ENCODE measurements at regions of chr4 and their contacts with region 1.

Region 1: DNA sequence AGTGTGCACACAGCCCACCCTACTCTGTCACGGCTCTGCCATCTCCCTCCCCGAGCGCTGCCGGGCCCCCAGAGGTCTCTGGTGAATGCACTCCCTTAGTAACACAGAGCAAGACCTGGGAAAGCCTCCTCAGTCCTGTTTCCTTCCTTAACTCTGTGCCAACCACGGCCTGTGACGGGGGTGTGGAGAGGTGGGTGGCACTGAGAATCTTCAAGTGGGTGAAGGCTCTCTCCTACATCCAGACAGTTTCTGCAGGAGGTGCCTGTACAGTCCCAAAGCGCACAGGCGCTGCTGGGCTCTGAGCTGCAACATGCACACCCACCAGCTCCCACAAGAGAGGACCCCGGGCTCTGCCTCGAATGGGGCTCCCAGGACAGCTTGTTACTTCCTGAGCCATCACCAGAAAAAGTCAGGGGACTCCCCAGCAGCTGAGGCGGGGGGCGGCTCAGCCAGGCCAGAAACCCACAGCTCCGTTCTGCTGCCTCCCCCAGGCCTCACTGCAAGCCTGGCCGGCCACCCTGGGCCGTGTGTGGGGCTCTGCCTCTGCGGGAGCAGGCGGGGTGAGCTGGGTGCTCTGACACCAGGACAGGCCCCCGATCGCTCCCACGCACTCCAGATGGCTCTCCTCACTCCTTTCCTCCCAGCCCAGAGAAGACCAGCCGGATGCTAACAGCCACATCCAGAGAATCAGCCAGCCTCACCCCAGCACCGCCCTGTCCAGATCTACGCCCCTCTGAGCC is 29.7 kb downstream of the FAM53A start:
- DNase-seq: no peak
- H3K4me3 ChIP-seq: no peak overlapping the region
- H3K27ac ChIP-seq: no peak overlapping the region
- H3K4me1 ChIP-seq: no peaks in the 10 kb centered on the region
- H3K27me3 ChIP-seq: no peaks in the 10 kb centered on the region
- CTCF ChIP-seq: no peak

Region 2: GRCh38 chr4:1154523-1155182 is 499.7 kb before region 1 on chr4:
- CTCF ChIA-PET with region 1: no interaction called
- POLR2A ChIA-PET with region 1: interaction called, 21 read pairs
- intact Hi-C with region 1: no loop called
- DNase-seq: no peak
- H3K4me3 ChIP-seq: no peak overlapping the region
- H3K27ac ChIP-seq: no peak overlapping the region
- H3K4me1 ChIP-seq: no peaks in the 10 kb centered on the region
- H3K27me3 ChIP-seq: peaks cover 69% of the 10 kb centered on the region
- CTCF ChIP-seq: no peak

Region 3: GRCh38 chr4:1346781-1347409 is 307.5 kb before region 1 on chr4 and contains the start of gene UVSSA:
- CTCF ChIA-PET with region 1: no interaction called
- POLR2A ChIA-PET with region 1: no interaction called
- intact Hi-C with region 1: no loop called
- DNase-seq: peak; percentile 99
- H3K4me3 ChIP-seq: peak within 1 kb of the TSS; percentile 81
- H3K27ac ChIP-seq: peak within 1 kb of the TSS; percentile 93
- H3K4me1 ChIP-seq: no peaks in the 10 kb centered on the region
- H3K27me3 ChIP-seq: no peaks in the 10 kb centered on the region
- CTCF ChIP-seq: no peak
- total RNA-seq, gene UVSSA: 20.3 and 27.8 TPM in 2 replicates

Region 4: GRCh38 chr4:1512738-1513660 is 141.4 kb before region 1 on chr4:
- CTCF ChIA-PET with region 1: no interaction called
- POLR2A ChIA-PET with region 1: no interaction called
- intact Hi-C with region 1: no loop called
- DNase-seq: peak; percentile 54
- H3K4me3 ChIP-seq: peak overlapping the region; percentile 25
- H3K27ac ChIP-seq: no peak overlapping the region
- H3K4me1 ChIP-seq: no peaks in the 10 kb centered on the region
- H3K27me3 ChIP-seq: peaks cover 26% of the 10 kb centered on the region
- CTCF ChIP-seq: peak; percentile 51; the same call in 1 of the 2 replicates

Region 5: DNA sequence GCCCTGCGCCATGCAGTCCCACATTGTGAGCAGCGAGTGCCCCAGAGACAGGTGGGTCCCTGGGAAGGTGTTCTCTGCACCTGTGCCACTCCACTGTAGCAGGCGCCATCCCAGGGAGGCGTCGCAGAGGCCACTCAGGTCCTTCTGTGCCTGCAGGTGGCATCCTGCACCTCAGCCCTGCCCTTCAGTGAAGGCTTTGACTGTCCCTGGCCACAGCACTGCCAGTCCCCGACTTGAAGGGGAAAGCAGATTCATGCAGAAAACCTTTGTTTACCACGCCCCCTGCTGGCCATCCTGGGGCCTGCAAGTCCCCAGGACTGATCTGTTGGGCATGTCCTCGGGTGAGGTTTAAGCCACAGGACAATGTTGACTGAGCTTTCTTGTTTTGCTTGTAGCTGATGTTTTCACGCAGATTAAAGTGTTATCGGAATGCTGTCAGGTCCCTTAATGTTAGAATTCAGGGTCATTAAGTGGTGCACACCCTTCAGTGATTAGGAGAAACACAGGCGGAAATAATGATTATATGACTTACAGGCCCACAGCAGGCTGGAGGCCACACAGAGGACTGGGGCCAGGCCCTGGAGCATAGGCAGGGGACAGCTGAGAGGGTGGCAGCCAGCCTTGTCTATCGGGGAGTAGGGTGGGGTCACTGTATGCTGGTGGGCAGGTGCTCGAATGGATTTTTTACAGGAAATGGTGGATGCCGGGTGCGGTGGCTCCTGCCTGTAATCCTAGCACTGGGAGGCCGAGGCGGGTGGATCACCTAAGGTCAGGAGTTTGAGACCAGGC is 72.0 kb after region 1 on chr4:
- CTCF ChIA-PET with region 1: no interaction called
- POLR2A ChIA-PET with region 1: no interaction called
- intact Hi-C with region 1: no loop called
- DNase-seq: peak; percentile 91
- H3K4me3 ChIP-seq: no peak overlapping the region
- H3K27ac ChIP-seq: peak overlapping the region; percentile 12
- H3K4me1 ChIP-seq: peaks cover 10% of the 10 kb centered on the region
- H3K27me3 ChIP-seq: no peaks in the 10 kb centered on the region
- CTCF ChIP-seq: peak; percentile 98